ENCODE measurements at regions of chr9 and their contacts with region 1.

Region 1: GRCh38 chr9:75890472-75891276 is at the start of gene PCSK5:
- H3K4me3 ChIP-seq: peak within 1 kb of the TSS; percentile 81
- H3K27ac ChIP-seq: peak within 1 kb of the TSS; percentile 82
- H3K4me1 ChIP-seq: peaks cover 11% of the 10 kb centered on the region
- CTCF ChIP-seq: peak; percentile 79

Region 2: GRCh38 chr9:75880618-75881017 is 10.1 kb before region 1 on chr9:
- CTCF ChIA-PET with region 1: no interaction called
- POLR2A ChIA-PET with region 1: interaction called, 14 read pairs
- H3K4me3 ChIP-seq: no peak overlapping the region
- H3K27ac ChIP-seq: no peak overlapping the region
- H3K4me1 ChIP-seq: no peaks in the 10 kb centered on the region
- CTCF ChIP-seq: no peak

Region 3: DNA sequence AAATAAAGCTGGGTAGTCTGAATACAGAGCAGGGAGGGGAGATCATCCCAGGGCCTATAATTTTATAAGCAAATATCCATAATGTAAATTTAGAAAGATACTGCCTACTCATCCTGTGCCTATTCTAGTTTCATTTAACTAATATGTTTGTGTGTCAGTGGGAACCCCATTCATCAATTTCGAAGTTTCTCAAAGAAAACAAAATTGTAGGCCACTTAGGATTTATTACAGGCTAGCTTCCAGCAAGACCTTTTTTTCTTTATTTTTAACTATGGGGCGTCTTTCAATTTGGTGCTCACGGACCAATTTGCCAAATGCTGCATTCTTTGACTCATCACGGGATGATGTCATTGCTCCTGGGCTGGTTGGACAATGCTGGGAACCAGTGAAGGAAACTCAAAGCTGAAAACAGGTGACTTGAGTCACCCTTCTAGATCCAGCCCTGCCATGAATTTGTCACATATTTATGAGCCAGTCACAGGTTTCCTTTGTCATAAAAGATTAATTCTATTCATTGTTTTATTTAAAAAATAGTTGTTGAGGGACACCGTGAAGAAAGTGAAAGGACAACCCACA is 13.2 kb after region 1 on chr9:
- CTCF ChIA-PET with region 1: interaction called, 4 read pairs
- POLR2A ChIA-PET with region 1: interaction called, 19 read pairs
- H3K4me3 ChIP-seq: no peak overlapping the region
- H3K27ac ChIP-seq: no peak overlapping the region
- H3K4me1 ChIP-seq: peaks cover 10% of the 10 kb centered on the region
- CTCF ChIP-seq: no peak

Measured in HEK293 (cell line).